CD14-positive monocyte (primary cell): ENCODE measurements at regions of chrX and their contacts with region 1.

Region 1: GRCh38 chrX:65595460-65595876 is 60.9 kb upstream of the LAS1L start:
- DNase-seq: peak; percentile 87 to 93 (median 93)
- H3K4me3 ChIP-seq: peak overlapping the region in 1 of 3 experiments; percentile 44
- H3K4me3 Mint-ChIP-seq: no peak overlapping the region
- H3K27ac ChIP-seq: peak overlapping the region in 1 of 2 donors; percentile 85
- H3K27ac Mint-ChIP-seq: peak overlapping the region; percentile 76 to 93 (median 87)
- H3K4me1 ChIP-seq: peaks cover 35 to 38% of the 10 kb centered on the region in 2 donors
- H3K4me1 Mint-ChIP-seq: peaks cover 49% of the 10 kb centered on the region
- H3K27me3 ChIP-seq: peaks cover 0 to 24% of the 10 kb centered on the region in 2 donors
- H3K27me3 Mint-ChIP-seq: peaks cover 0 to 32% (median 2%) of the 10 kb centered on the region in 3 donors
- CTCF ChIP-seq: peak; percentile 92

Region 2: DNA sequence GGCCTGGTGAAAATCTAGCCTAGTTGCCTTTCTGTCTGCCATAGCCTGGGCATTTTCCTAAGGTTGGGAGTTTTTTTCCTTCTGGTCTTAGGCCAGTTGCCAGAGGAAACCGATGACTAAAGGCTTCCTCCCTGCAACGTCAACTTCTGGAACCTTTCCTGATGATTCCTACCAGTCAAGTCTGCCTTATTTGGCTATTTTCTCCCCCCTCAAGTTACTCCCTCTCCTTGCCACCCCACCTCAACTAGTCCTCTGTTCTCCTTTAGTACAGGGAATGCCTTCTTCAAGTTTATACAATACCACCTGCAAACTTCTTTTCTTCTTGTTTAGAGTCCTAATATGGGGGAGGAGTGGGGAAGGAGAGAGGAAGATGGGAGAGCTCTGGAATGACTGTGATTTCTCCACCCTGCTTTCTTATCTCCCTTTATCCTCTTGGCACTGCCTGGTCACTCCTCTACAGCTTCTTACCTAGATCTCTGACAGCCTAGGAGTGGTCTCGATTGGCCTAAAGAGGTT is 82.5 kb after region 1 on chrX:
- intact Hi-C with region 1: loop called in 1 of 2 experiments (anchors 10 kb)
- DNase-seq: peak in 2 of 3 donors; percentile 21 to 47
- H3K4me3 ChIP-seq: peak overlapping the region in 1 of 3 experiments; percentile 49
- H3K4me3 Mint-ChIP-seq: peak overlapping the region in 1 of 2 donors; percentile 46
- H3K27ac ChIP-seq: peak overlapping the region; percentile 70 to 75
- H3K27ac Mint-ChIP-seq: peak overlapping the region; percentile 77 to 94 (median 87)
- H3K4me1 ChIP-seq: peaks cover 93 to 97% of the 10 kb centered on the region in 2 donors
- H3K4me1 Mint-ChIP-seq: peaks cover 85% of the 10 kb centered on the region
- H3K27me3 ChIP-seq: peaks cover 0 to 12% of the 10 kb centered on the region in 2 donors
- H3K27me3 Mint-ChIP-seq: peaks cover 0 to 26% (median 1%) of the 10 kb centered on the region in 3 donors
- CTCF ChIP-seq: no peak

Region 3: DNA sequence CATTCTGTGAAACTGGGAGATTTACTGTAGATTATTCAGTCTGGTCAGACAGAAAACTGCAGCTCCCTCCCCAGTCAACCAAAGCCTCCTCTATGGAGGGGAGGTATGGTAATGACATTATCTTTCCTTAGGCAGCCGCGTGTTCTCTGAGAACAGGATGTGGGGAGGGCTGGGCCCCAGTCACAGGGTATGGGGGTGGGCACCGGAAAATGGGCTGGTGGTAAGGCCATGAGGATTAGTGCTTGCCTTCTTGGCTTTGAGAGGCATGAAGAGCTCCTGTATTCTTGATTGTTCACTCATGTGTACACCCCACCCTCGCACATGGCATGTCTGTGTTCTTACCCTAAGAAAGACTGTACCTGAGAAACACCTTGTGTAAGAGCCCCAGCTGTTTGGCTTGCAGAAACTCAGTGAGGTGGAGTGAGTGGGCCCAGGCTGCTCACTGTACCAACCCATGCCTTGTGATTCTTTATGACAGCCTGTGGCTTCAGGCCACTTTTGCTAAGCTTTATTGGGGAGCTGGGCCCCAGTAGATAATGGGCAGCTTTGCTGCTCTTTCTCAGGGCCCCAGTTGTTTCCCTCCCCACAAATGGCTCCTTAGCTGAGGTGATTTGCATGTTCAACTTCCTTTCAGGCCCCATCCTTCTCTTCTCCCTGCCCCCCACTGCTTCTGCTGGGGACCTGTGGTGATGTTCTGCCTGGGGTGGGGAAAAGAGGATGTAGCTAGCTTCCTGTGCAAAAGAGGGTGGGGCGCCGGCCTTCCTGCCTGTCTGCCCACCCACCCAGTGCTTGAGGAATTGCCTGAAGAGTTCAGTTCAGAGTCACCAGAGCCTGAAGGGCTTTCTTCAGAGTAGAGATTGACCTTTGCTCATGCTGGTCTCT is 102.7 kb after region 1 on chrX:
- intact Hi-C with region 1: loop called in 1 of 2 experiments (anchors 5 kb)
- DNase-seq: peak; percentile 56 to 67 (median 58)
- H3K4me3 ChIP-seq: peak overlapping the region in 2 of 3 experiments; percentile 4 to 65
- H3K4me3 Mint-ChIP-seq: peak overlapping the region; percentile 62 to 67
- H3K27ac ChIP-seq: peak overlapping the region; percentile 70 to 76
- H3K27ac Mint-ChIP-seq: peak overlapping the region; percentile 85 to 95 (median 93)
- H3K4me1 ChIP-seq: peaks cover 97 to 98% of the 10 kb centered on the region in 2 donors
- H3K4me1 Mint-ChIP-seq: peaks cover 93% of the 10 kb centered on the region
- H3K27me3 ChIP-seq: no peaks in the 10 kb centered on the region
- H3K27me3 Mint-ChIP-seq: peaks cover 0 to 10% (median 0%) of the 10 kb centered on the region in 3 donors
- CTCF ChIP-seq: no peak

Region 4: DNA sequence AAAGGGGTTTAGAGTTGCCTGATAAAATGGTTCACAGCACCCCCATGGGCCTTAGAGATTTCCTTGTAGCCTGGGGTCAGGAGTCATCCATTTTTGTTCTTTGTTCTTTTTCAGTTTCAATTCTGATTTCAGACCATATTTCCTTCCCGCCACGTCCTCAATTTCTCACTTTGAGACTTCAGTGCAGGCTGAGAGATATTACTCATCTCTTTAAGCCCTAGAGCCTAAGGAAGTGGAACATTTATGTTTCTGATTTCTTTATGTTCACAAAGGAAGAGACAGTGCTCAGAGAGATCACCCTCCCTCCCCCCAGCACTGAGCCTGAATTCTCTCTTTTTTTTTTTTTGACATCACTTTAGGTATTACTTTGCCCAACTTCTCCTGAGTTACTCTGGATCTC is 128.2 kb after region 1 on chrX:
- intact Hi-C with region 1: loop called in 1 of 2 experiments (anchors 10 kb)
- DNase-seq: peak; percentile 30 to 51 (median 37)
- H3K4me3 ChIP-seq: no peak overlapping the region
- H3K4me3 Mint-ChIP-seq: no peak overlapping the region
- H3K27ac ChIP-seq: peak overlapping the region in 1 of 2 donors; percentile 57
- H3K27ac Mint-ChIP-seq: peak overlapping the region; percentile 37 to 91 (median 78)
- H3K4me1 ChIP-seq: peaks cover 39 to 45% of the 10 kb centered on the region in 2 donors
- H3K4me1 Mint-ChIP-seq: peaks cover 52% of the 10 kb centered on the region
- H3K27me3 ChIP-seq: peaks cover 0 to 35% of the 10 kb centered on the region in 2 donors
- H3K27me3 Mint-ChIP-seq: peaks cover 0 to 36% (median 0%) of the 10 kb centered on the region in 3 donors
- CTCF ChIP-seq: no peak

Region 5: GRCh38 chrX:65985922-65986588 is 390.6 kb after region 1 on chrX:
- intact Hi-C with region 1: loop called in 1 of 2 experiments (anchors 5 kb)
- DNase-seq: peak; percentile 63 to 80 (median 74)
- H3K4me3 ChIP-seq: peak overlapping the region; percentile 24 to 62 (median 25)
- H3K4me3 Mint-ChIP-seq: peak overlapping the region in 1 of 2 donors; percentile 76
- H3K27ac ChIP-seq: peak overlapping the region in 1 of 2 donors; percentile 72
- H3K27ac Mint-ChIP-seq: peak overlapping the region; percentile 68 to 90 (median 84)
- H3K4me1 ChIP-seq: peaks cover 41 to 53% of the 10 kb centered on the region in 2 donors
- H3K4me1 Mint-ChIP-seq: peaks cover 58% of the 10 kb centered on the region
- H3K27me3 ChIP-seq: peaks cover 0 to 18% of the 10 kb centered on the region in 2 donors
- H3K27me3 Mint-ChIP-seq: peaks cover 0 to 24% (median 0%) of the 10 kb centered on the region in 3 donors
- CTCF ChIP-seq: peak; percentile 50